ENCODE measurements at regions of chr6 and their contacts with region 1.

Region 1: DNA sequence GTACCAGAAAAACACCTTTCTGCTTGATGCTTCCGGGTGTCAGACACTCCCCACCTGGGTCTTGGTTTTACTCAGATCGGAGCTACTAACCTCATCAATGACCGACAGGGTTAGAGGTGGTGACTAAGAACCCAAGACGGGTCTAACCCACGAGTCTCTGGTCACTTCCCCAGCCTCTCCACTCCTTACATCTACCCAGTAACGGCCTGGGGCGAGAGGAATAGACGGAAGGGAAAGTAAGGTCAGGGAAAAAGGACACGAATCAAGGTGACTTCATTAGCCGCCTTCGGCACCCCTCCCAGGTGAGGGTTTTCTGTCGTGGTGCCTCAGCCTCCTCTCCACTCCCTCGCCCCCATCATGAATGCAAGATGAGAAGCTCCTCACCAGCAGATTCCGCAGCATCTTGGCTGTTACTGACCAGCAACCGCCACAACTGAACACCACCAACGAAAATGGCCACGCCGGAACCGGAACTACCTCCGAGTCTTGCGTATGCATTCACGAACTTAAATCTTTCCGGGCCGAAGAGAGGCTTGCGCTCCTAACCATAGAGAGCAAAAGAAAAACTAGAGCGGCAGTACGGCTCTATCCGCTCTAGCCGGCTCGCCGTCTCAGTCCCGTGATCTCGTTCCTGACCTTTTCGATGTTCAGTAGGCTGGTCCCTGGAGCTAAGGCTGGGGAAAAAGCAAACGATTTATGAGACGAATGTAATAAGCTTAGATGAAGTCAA is at the start of gene COX7A2:
- DNase-seq: peak; percentile 95
- H3K4me3 ChIP-seq: peak within 1 kb of the TSS; percentile 97
- H3K27ac ChIP-seq: peak within 1 kb of the TSS; percentile 80
- H3K4me1 ChIP-seq: peaks cover 13% of the 10 kb centered on the region
- CTCF ChIP-seq: no peak
- total RNA-seq, gene COX7A2: 133 and 210 TPM in 2 replicates

Region 2: GRCh38 chr6:75257343-75258087 is 14.0 kb after region 1 on chr6:
- CTCF ChIA-PET with region 1: no interaction called
- POLR2A ChIA-PET with region 1: interaction called, 13 read pairs
- intact Hi-C with region 1: no loop called
- DNase-seq: no peak
- H3K4me3 ChIP-seq: no peak overlapping the region
- H3K27ac ChIP-seq: no peak overlapping the region
- H3K4me1 ChIP-seq: no peaks in the 10 kb centered on the region
- CTCF ChIP-seq: no peak

Region 3: GRCh38 chr6:75601304-75602245 is 358.1 kb after region 1 on chr6 and contains the start of gene SENP6:
- CTCF ChIA-PET with region 1: no interaction called
- POLR2A ChIA-PET with region 1: interaction called, 11 read pairs
- intact Hi-C with region 1: loop called (anchors 5 kb)
- DNase-seq: peak; percentile 85
- H3K4me3 ChIP-seq: peak within 1 kb of the TSS; percentile 98
- H3K27ac ChIP-seq: peak within 1 kb of the TSS; percentile 82
- H3K4me1 ChIP-seq: peaks cover 30% of the 10 kb centered on the region
- CTCF ChIP-seq: no peak
- total RNA-seq, gene SENP6: 61.1 and 63.5 TPM in 2 replicates

Measured in OCI-LY7 (cell line).